ENCODE measurements at regions of chr3 and their contacts with region 1.

Region 1: DNA sequence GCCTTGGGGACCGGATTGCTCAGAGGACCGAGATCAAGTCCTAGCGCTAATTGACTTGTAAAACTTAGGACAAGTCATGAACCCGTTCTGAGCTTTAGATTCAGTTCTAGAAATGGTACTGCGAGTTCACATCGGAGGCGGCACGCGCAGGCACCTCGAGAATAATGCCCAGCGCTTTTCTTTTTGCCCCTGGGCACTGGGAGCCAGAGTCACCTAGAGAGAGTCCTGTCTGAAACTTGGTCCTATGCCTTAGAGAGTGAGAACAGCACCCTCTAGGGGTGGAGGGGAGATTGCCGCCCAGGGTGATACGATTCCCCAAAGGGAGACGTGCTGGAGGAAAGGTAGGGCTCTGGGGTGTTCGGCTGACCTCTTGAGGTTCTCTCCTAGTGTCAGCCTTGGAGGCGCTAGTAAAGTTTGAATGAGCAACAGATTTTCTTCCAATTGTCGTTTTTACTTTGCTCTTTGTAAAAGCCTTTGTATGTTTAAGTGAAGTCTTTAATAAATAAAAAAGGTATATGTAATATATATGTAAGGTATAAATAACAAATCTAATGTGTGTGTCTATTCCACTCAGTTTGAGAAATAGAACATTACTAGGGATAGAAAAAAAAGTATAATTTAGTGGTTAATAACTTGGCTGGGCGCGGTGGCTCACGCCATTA is 826 bp downstream of the EEF1AKMT4 start:
- DNase-seq: peak; percentile 82 to 92 (median 86)
- H3K4me3 ChIP-seq: peak overlapping the region; percentile 92 to 99
- H3K4me3 Mint-ChIP-seq: peak overlapping the region; percentile 88 to 99 (median 96)
- H3K27ac ChIP-seq: peak overlapping the region; percentile 66
- H3K27ac Mint-ChIP-seq: peak overlapping the region; percentile 46 to 100 (median 90)
- H3K4me1 ChIP-seq: peaks cover 11% of the 10 kb centered on the region
- H3K4me1 Mint-ChIP-seq: peaks cover 8 to 20% (median 12%) of the 10 kb centered on the region in 4 donors
- H3K27me3 ChIP-seq: no peaks in the 10 kb centered on the region
- H3K27me3 Mint-ChIP-seq: peaks cover 0 to 4% of the 10 kb centered on the region in 2 donors

Region 2: GRCh38 chr3:183252973-183253901 is 997.1 kb before region 1 on chr3 and contains the start of gene B3GNT5:
- CTCF ChIA-PET with region 1: no interaction called
- POLR2A ChIA-PET with region 1: no interaction called
- intact Hi-C with region 1: no loop called
- DNase-seq: peak in 3 of 5 donors; percentile 12 to 21 (median 18)
- H3K4me3 ChIP-seq: peak within 1 kb of the TSS; percentile 40 to 54
- H3K4me3 Mint-ChIP-seq: peak within 1 kb of the TSS; percentile 77 to 86 (median 80)
- H3K27ac ChIP-seq: no peak within 1 kb of the TSS
- H3K27ac Mint-ChIP-seq: peak within 1 kb of the TSS in 3 of 7 donors; percentile 54 to 61 (median 56)
- H3K4me1 ChIP-seq: no peaks in the 10 kb centered on the region
- H3K4me1 Mint-ChIP-seq: peaks cover 5 to 14% (median 9%) of the 10 kb centered on the region in 4 donors
- H3K27me3 ChIP-seq: no peaks in the 10 kb centered on the region
- H3K27me3 Mint-ChIP-seq: peaks cover 25 to 27% of the 10 kb centered on the region in 2 donors
- total RNA-seq, gene B3GNT5: 0.25 to 0.41 TPM

Region 3: GRCh38 chr3:183895296-183895695 is 355.0 kb before region 1 on chr3:
- CTCF ChIA-PET with region 1: interaction called, 18 read pairs
- POLR2A ChIA-PET with region 1: no interaction called
- intact Hi-C with region 1: loop called (anchors 1 kb)
- DNase-seq: peak; percentile 48 to 60 (median 57)
- H3K4me3 ChIP-seq: no peak overlapping the region
- H3K4me3 Mint-ChIP-seq: no peak overlapping the region
- H3K27ac ChIP-seq: no peak overlapping the region
- H3K27ac Mint-ChIP-seq: no peak overlapping the region
- H3K4me1 ChIP-seq: no peaks in the 10 kb centered on the region
- H3K4me1 Mint-ChIP-seq: peaks cover 0 to 3% (median 1%) of the 10 kb centered on the region in 4 donors
- H3K27me3 ChIP-seq: no peaks in the 10 kb centered on the region
- H3K27me3 Mint-ChIP-seq: peaks cover 17 to 37% of the 10 kb centered on the region in 2 donors

Region 4: GRCh38 chr3:184135149-184135910 is 115.0 kb before region 1 on chr3 and contains the start of gene EIF2B5:
- CTCF ChIA-PET with region 1: interaction called, 3 read pairs
- POLR2A ChIA-PET with region 1: interaction called, 8 read pairs
- intact Hi-C with region 1: loop called (anchors 1 kb)
- DNase-seq: peak; percentile 85 to 90 (median 86)
- H3K4me3 ChIP-seq: peak within 1 kb of the TSS; percentile 95 to 96
- H3K4me3 Mint-ChIP-seq: peak within 1 kb of the TSS; percentile 95 to 99 (median 98)
- H3K27ac ChIP-seq: peak within 1 kb of the TSS; percentile 78
- H3K27ac Mint-ChIP-seq: peak within 1 kb of the TSS; percentile 90 to 98 (median 97)
- H3K4me1 ChIP-seq: peaks cover 28% of the 10 kb centered on the region
- H3K4me1 Mint-ChIP-seq: peaks cover 23 to 49% (median 33%) of the 10 kb centered on the region in 4 donors
- H3K27me3 ChIP-seq: no peaks in the 10 kb centered on the region
- H3K27me3 Mint-ChIP-seq: no peaks in the 10 kb centered on the region
- total RNA-seq, gene EIF2B5: 82.3 to 87.6 TPM

Region 5: DNA sequence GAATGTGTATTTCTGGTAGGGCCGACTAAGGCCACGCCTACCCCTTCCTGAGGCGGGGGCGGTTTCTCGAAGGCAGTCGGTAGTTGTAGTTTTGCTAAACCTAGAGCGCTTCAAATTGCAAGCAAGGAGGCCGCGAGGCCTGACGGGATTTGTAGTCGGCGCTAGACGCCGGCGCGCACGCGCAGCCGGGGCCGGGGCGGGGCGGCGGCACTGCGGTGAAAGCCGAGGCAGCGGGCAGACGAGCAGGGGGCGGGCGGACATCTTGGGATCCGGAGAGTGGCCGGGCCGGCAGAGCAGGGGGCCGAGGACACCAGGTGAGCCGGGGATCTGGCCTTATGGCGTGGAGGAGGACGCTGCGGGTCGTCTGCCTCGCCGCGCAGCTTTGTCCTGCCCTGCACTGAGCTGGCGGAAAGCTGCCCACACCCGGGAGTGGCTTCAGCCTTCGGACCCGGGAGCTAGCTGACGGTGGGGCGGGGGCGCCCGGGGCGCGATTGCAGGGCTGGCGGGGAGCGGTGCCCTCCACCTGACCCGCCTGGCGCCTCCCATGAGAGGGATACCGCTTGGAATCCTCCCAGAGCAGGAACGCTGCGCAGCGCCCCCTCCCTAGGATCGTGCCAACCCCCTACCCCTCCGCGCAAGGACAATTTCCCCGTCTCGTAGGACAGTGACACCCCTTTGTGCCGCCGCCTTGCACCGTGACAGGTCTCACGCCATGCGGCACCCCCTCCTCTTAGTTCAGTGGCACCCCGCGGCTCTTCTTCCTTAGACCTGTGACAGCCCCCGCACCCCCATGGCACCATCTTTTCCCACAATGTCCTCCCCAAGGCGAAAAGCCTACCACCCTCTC is 75.4 kb before region 1 on chr3 and contains the start of gene AP2M1:
- CTCF ChIA-PET with region 1: interaction called, 7 read pairs
- POLR2A ChIA-PET with region 1: no interaction called
- intact Hi-C with region 1: loop called (anchors 1 kb)
- DNase-seq: peak; percentile 98 to 99 (median 99)
- H3K4me3 ChIP-seq: peak within 1 kb of the TSS; percentile 68 to 90
- H3K4me3 Mint-ChIP-seq: peak within 1 kb of the TSS; percentile 90 to 98 (median 96)
- H3K27ac ChIP-seq: peak within 1 kb of the TSS; percentile 88
- H3K27ac Mint-ChIP-seq: peak within 1 kb of the TSS; percentile 88 to 95 (median 92)
- H3K4me1 ChIP-seq: peaks cover 37% of the 10 kb centered on the region
- H3K4me1 Mint-ChIP-seq: peaks cover 17 to 43% (median 30%) of the 10 kb centered on the region in 4 donors
- H3K27me3 ChIP-seq: no peaks in the 10 kb centered on the region
- H3K27me3 Mint-ChIP-seq: no peaks in the 10 kb centered on the region
- total RNA-seq, gene AP2M1: 206 to 208 TPM

Region 6: DNA sequence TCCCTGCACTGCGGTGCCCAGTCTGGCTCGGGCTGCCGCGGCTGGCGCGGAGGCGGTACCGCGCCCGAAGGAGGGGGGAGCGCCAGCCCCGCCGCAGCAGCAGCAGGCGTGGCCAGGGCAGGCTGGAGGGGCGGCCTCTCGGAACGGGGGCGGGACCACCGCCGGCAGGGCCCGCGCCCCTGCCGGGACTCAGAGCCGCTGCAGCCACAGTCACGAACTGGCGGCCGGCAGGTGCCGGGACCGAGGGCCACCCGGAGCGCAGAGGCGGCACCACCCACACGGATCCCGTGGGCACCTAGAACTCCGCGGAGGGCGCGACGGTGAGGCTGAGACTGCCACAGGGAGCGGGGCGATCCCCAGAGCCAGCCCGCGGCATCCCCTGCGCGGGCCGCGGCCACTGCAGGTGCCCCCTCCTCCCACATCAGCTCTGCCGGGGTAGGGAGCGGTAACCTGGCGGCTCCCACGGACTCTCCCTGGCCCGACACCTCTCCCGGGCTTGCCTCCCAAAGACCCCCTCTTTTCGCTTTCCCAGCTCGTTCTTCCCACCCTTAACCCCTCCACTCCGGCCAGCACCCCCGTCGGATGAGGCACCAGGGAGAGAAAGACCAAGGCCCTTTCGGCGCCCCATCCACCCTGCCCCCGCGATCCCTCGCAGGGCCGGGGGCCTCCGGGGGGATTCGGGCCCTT is 20.8 kb before region 1 on chr3 and contains the start of gene VWA5B2:
- CTCF ChIA-PET with region 1: interaction called, 76 read pairs
- POLR2A ChIA-PET with region 1: interaction called, 8 read pairs
- intact Hi-C with region 1: loop called (anchors 1 kb)
- DNase-seq: peak; percentile 69 to 77 (median 70)
- H3K4me3 ChIP-seq: peak within 1 kb of the TSS; percentile 23 to 51
- H3K4me3 Mint-ChIP-seq: peak within 1 kb of the TSS; percentile 53 to 76 (median 66)
- H3K27ac ChIP-seq: no peak within 1 kb of the TSS
- H3K27ac Mint-ChIP-seq: peak within 1 kb of the TSS in 1 of 7 donors; percentile 76
- H3K4me1 ChIP-seq: peaks cover 11% of the 10 kb centered on the region
- H3K4me1 Mint-ChIP-seq: peaks cover 5 to 17% (median 7%) of the 10 kb centered on the region in 4 donors
- H3K27me3 ChIP-seq: peaks cover 40% of the 10 kb centered on the region
- H3K27me3 Mint-ChIP-seq: peaks cover 44 to 46% of the 10 kb centered on the region in 2 donors
- total RNA-seq, gene VWA5B2: not detected

Region 7: GRCh38 chr3:184298759-184299496 is 48.6 kb after region 1 on chr3 and contains the start of gene PSMD2:
- CTCF ChIA-PET with region 1: interaction called, 7 read pairs
- POLR2A ChIA-PET with region 1: no interaction called
- intact Hi-C with region 1: loop called (anchors 1 kb)
- DNase-seq: peak; percentile 96 to 97 (median 96)
- H3K4me3 ChIP-seq: peak within 1 kb of the TSS; percentile 68 to 85
- H3K4me3 Mint-ChIP-seq: peak within 1 kb of the TSS; percentile 88 to 96 (median 94)
- H3K27ac ChIP-seq: peak within 1 kb of the TSS; percentile 73
- H3K27ac Mint-ChIP-seq: peak within 1 kb of the TSS; percentile 90 to 95 (median 94)
- H3K4me1 ChIP-seq: peaks cover 14% of the 10 kb centered on the region
- H3K4me1 Mint-ChIP-seq: peaks cover 14 to 35% (median 21%) of the 10 kb centered on the region in 4 donors
- H3K27me3 ChIP-seq: no peaks in the 10 kb centered on the region
- H3K27me3 Mint-ChIP-seq: no peaks in the 10 kb centered on the region
- total RNA-seq, gene PSMD2: 148 to 154 TPM

Region 8: DNA sequence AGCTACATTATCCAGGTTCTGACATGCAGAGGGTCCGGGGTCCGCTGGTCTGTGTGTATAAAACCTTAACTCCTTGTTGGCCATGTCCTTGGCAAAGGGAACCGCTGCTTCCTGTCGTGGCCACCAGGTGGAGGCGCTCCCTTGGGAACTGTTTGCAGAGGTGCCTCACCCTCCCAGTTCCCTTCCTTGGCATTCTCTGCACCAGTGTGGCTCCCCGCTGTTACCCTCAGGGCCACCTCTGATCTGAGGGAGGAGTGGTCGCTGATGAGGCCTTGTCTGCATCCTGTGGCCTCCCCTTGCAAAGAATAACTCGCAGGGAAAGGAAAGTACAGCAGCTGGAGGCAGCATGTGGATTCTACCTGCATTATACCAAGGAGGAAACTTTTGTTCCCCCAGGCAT is 219.1 kb after region 1 on chr3:
- CTCF ChIA-PET with region 1: no interaction called
- POLR2A ChIA-PET with region 1: no interaction called
- intact Hi-C with region 1: no loop called
- DNase-seq: no peak
- H3K4me3 ChIP-seq: no peak overlapping the region
- H3K4me3 Mint-ChIP-seq: no peak overlapping the region
- H3K27ac ChIP-seq: no peak overlapping the region
- H3K27ac Mint-ChIP-seq: no peak overlapping the region
- H3K4me1 ChIP-seq: no peaks in the 10 kb centered on the region
- H3K4me1 Mint-ChIP-seq: peaks cover 2 to 8% (median 4%) of the 10 kb centered on the region in 4 donors
- H3K27me3 ChIP-seq: no peaks in the 10 kb centered on the region
- H3K27me3 Mint-ChIP-seq: peaks cover 10 to 25% of the 10 kb centered on the region in 2 donors

Region 9: GRCh38 chr3:185585859-185586685 is 1335.8 kb after region 1 on chr3 and contains the start of gene SENP2:
- CTCF ChIA-PET with region 1: no interaction called
- POLR2A ChIA-PET with region 1: no interaction called
- intact Hi-C with region 1: loop called (anchors 5 kb)
- DNase-seq: peak; percentile 99 to 100 (median 100)
- H3K4me3 ChIP-seq: peak within 1 kb of the TSS; percentile 57 to 78
- H3K4me3 Mint-ChIP-seq: peak within 1 kb of the TSS; percentile 83 to 94 (median 90)
- H3K27ac ChIP-seq: peak within 1 kb of the TSS; percentile 95
- H3K27ac Mint-ChIP-seq: peak within 1 kb of the TSS; percentile 93 to 98 (median 96)
- H3K4me1 ChIP-seq: peaks cover 27% of the 10 kb centered on the region
- H3K4me1 Mint-ChIP-seq: peaks cover 18 to 32% (median 24%) of the 10 kb centered on the region in 4 donors
- H3K27me3 ChIP-seq: no peaks in the 10 kb centered on the region
- H3K27me3 Mint-ChIP-seq: no peaks in the 10 kb centered on the region
- total RNA-seq, gene SENP2: 46.0 to 54.3 TPM

Region 10: GRCh38 chr3:186021673-186022362 is 1771.5 kb after region 1 on chr3:
- CTCF ChIA-PET with region 1: no interaction called
- POLR2A ChIA-PET with region 1: no interaction called
- intact Hi-C with region 1: no loop called
- DNase-seq: no peak
- H3K4me3 ChIP-seq: no peak overlapping the region
- H3K4me3 Mint-ChIP-seq: no peak overlapping the region
- H3K27ac ChIP-seq: no peak overlapping the region
- H3K27ac Mint-ChIP-seq: no peak overlapping the region
- H3K4me1 ChIP-seq: no peaks in the 10 kb centered on the region
- H3K4me1 Mint-ChIP-seq: no peaks in the 10 kb centered on the region
- H3K27me3 ChIP-seq: no peaks in the 10 kb centered on the region
- H3K27me3 Mint-ChIP-seq: peaks cover 9 to 21% of the 10 kb centered on the region in 2 donors